ENCODE measurements at regions of chr20 and their contacts with region 1.

Region 1: GRCh38 chr20:61886721-61887594 is 178.7 kb downstream of the TAF4 start:
- DNase-seq: peak; percentile 69
- H3K4me3 ChIP-seq: no peak overlapping the region
- H3K27ac ChIP-seq: no peak overlapping the region
- H3K4me1 ChIP-seq: peaks cover 10% of the 10 kb centered on the region
- CTCF ChIP-seq: peak; percentile 95

Region 2: GRCh38 chr20:61724376-61724775 is 162.6 kb before region 1 on chr20:
- CTCF ChIA-PET with region 1: no interaction called
- POLR2A ChIA-PET with region 1: no interaction called
- intact Hi-C with region 1: loop called (anchors 10 kb)
- DNase-seq: no peak
- H3K4me3 ChIP-seq: no peak overlapping the region
- H3K27ac ChIP-seq: no peak overlapping the region
- H3K4me1 ChIP-seq: no peaks in the 10 kb centered on the region
- CTCF ChIP-seq: peak; percentile 33; the same call in 1 of the 2 replicates

Region 3: GRCh38 chr20:62182613-62183425 is 295.9 kb after region 1 on chr20 and contains the start of gene MTG2:
- CTCF ChIA-PET with region 1: no interaction called
- POLR2A ChIA-PET with region 1: no interaction called
- intact Hi-C with region 1: no loop called
- DNase-seq: peak; percentile 98
- H3K4me3 ChIP-seq: peak within 1 kb of the TSS; percentile 91
- H3K27ac ChIP-seq: peak within 1 kb of the TSS; percentile 83
- H3K4me1 ChIP-seq: peaks cover 18% of the 10 kb centered on the region
- CTCF ChIP-seq: no peak
- total RNA-seq, gene MTG2: 20.3 and 24.1 TPM in 2 replicates

Measured in OCI-LY7 (cell line).